A549 (cell line): ENCODE measurements at regions of chr15 and their contacts with region 1.

Region 1: GRCh38 chr15:66851226-66852071 is 149.4 kb downstream of the SMAD6 start:
- DNase-seq: peak; percentile 92 to 97
- ATAC-seq: peak; percentile 87 to 95
- H3K4me3 ChIP-seq: no peak overlapping the region
- H3K27ac ChIP-seq: peak overlapping the region; percentile 64 to 81
- H3K4me1 ChIP-seq: peaks cover 34% of the 10 kb centered on the region
- CTCF ChIP-seq: peak; percentile 93
- EP300 ChIP-seq: no peak
- POLR2A ChIP-seq: no peak
- RAD21 ChIP-seq: peak; percentile 83 to 93

Region 2: GRCh38 chr15:66566963-66567531 is 284.4 kb before region 1 on chr15:
- CTCF ChIA-PET with region 1: interaction called, 10 read pairs
- POLR2A ChIA-PET with region 1: no interaction called
- DNase-seq: peak; percentile 81 to 86
- ATAC-seq: peak; percentile 77 to 92
- H3K4me3 ChIP-seq: no peak overlapping the region
- H3K27ac ChIP-seq: 0 out of 6 replicates have a peak overlapping the region, but pooled peaks of 1 of the 2 experiments have one; percentile 12
- H3K4me1 ChIP-seq: no peaks in the 10 kb centered on the region
- CTCF ChIP-seq: peak; percentile 91
- EP300 ChIP-seq: no peak
- POLR2A ChIP-seq: no peak
- RAD21 ChIP-seq: peak; percentile 46 to 54; a peak in 4 of 5 replicates

Region 3: DNA sequence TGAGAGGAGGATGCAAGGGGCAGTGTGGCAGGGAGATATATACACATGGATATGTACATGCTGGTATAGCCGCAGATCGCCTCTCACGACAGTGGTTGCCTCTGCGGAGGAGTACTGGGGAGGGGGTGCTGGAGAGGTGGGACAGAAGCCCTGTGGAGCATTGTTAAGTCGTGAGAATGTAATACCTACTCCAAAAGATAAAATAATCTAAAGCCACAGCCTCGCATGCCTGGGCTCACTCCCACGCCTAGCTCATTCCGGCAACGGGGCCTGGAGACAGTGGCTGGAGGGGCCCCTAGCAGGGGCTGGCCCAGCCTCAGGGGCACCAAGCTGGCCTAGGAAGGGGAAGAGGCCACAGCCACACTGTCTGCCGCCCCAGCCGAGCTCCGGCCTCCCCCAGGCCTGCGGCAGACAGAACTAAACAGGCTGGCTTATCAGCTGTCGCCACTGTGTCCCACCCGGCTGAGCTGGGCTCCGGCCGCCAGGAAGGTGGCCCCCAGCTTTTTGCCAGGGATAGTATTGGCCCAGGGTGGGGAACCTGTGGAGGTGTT is 220.6 kb before region 1 on chr15:
- CTCF ChIA-PET with region 1: interaction called, 14 read pairs
- POLR2A ChIA-PET with region 1: interaction called, 3 read pairs
- DNase-seq: no peak
- ATAC-seq: no peak
- H3K4me3 ChIP-seq: no peak overlapping the region
- H3K27ac ChIP-seq: peak overlapping the region in 1 of 2 experiments; percentile 18; a peak in 1 of 6 replicates
- H3K4me1 ChIP-seq: no peaks in the 10 kb centered on the region
- CTCF ChIP-seq: no peak
- EP300 ChIP-seq: no peak
- POLR2A ChIP-seq: no peak
- RAD21 ChIP-seq: no peak

Region 4: DNA sequence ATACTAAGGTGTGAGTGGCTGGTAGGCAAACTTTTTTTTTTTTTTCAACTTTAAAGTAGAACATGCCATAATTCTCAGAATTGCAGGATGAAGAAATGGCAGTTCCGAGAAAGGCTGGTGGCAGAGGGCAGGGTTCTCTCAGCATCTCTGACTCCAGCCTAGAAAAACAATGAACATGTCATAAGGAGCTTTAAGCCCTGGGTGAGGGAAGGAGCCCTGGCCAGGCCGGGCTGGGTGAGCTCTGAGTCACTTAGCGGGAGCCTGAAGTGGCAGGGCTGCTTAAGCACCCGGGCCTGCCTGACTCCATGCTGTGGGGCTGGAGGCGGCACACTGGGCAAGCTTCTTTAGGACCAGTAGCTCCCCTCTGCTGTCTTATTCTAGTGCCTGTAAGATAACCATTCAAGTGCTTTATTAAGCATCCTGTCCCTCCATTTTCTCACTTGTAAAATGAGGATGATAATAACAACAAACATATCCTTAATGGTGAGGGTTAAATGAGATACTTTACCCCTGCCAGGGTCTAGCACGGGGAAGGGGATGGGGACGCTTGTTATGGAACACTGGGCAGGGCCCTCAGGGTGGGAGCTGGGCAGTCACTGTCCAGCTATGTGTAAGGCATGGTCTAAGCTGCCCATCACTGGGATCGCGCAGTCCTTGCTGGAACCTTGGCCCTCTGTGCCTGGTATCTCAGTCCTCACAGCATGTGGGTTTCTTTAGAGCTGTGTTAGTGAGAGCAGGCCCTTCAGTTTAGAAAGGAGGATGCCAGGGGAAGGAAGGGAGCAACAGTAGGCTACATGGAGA is 131.0 kb before region 1 on chr15:
- CTCF ChIA-PET with region 1: interaction called, 283 read pairs
- POLR2A ChIA-PET with region 1: no interaction called
- DNase-seq: peak in 1 of 2 experiments; percentile 44
- ATAC-seq: peak; percentile 51 to 59; a peak in 5 of 6 replicates
- H3K4me3 ChIP-seq: no peak overlapping the region
- H3K27ac ChIP-seq: peak overlapping the region in 1 of 2 experiments; percentile 46; a peak in 3 of 6 replicates
- H3K4me1 ChIP-seq: peaks cover 91% of the 10 kb centered on the region
- CTCF ChIP-seq: no peak
- EP300 ChIP-seq: no peak
- POLR2A ChIP-seq: no peak
- RAD21 ChIP-seq: no peak

Region 5: DNA sequence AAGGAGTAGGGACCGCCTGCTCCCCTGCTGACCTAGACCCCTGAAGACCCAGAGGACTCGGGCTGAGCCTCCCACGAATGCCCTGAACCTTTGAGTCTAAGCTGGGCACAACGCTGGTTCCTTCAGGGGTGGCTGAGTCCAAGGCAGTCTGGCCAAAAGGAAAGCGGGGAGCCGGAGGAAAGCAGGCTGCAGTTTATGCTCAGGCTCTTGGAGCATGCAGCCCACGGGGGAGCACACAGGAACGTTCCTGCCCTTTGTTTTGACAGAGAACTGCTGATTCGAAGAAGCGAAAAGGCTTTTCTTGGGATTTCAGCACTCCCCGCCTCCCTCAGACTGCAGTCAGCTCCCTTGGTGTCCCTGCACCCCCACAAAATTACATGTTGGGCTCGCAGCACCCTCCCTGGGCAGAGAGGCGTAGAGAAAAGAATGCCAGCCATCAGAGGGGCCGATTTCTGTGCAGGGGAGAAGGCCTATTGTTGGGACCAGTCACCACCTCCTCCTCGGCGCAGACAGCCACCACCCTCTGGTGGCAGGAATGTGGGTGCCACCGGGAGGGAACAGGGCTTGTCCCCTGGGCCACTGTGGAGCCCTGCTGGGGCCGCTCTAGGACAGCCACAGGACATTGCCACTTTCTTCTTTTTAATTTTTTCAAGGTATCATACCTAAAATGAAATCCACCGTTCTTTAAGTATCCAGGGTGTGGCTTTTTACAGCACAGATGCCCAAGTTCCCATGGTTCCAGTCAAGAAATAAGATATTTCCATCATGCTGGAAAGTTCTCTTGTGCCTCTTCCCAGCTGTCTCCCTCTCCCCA is 77.2 kb before region 1 on chr15:
- CTCF ChIA-PET with region 1: interaction called, 465 read pairs
- POLR2A ChIA-PET with region 1: interaction called, 4 read pairs
- DNase-seq: peak; percentile 89 to 98
- ATAC-seq: peak; percentile 86 to 89
- H3K4me3 ChIP-seq: no peak overlapping the region
- H3K27ac ChIP-seq: peak overlapping the region; percentile 93 to 94
- H3K4me1 ChIP-seq: peaks cover 96% of the 10 kb centered on the region
- CTCF ChIP-seq: peak; percentile 100
- EP300 ChIP-seq: no peak
- POLR2A ChIP-seq: no peak
- RAD21 ChIP-seq: peak; percentile 99 to 100

Region 6: GRCh38 chr15:66815322-66815721 is 36.1 kb before region 1 on chr15:
- CTCF ChIA-PET with region 1: interaction called, 51 read pairs
- POLR2A ChIA-PET with region 1: no interaction called
- DNase-seq: no peak
- ATAC-seq: no peak
- H3K4me3 ChIP-seq: no peak overlapping the region
- H3K27ac ChIP-seq: no peak overlapping the region
- H3K4me1 ChIP-seq: peaks cover 16% of the 10 kb centered on the region
- CTCF ChIP-seq: no peak
- EP300 ChIP-seq: no peak
- POLR2A ChIP-seq: no peak
- RAD21 ChIP-seq: no peak

Region 7: GRCh38 chr15:66877477-66878271 is 26.2 kb after region 1 on chr15:
- CTCF ChIA-PET with region 1: interaction called, 17 read pairs
- POLR2A ChIA-PET with region 1: no interaction called
- DNase-seq: no peak
- ATAC-seq: no peak
- H3K4me3 ChIP-seq: no peak overlapping the region
- H3K27ac ChIP-seq: peak overlapping the region in 1 of 2 experiments; percentile 64; a peak in 3 of 6 replicates
- H3K4me1 ChIP-seq: peaks cover 30% of the 10 kb centered on the region
- CTCF ChIP-seq: no peak
- EP300 ChIP-seq: no peak
- POLR2A ChIP-seq: no peak
- RAD21 ChIP-seq: no peak